ENCODE measurements at regions of chr11 and their contacts with region 1.

Region 1: GRCh38 chr11:2885676-2886081 is at the start of gene CDKN1C:
- DNase-seq: peak; percentile 41 to 94 (median 89)
- H3K4me3 ChIP-seq: peak within 1 kb of the TSS; percentile 53 to 81 (median 71)
- H3K27ac ChIP-seq: peak within 1 kb of the TSS; percentile 40 to 94 (median 88)
- H3K27me3 ChIP-seq: peaks cover 0 to 10% (median 0%) of the 10 kb centered on the region in 45 donors
- CTCF ChIP-seq: peak in 1 of 56 donors; percentile 13
- total RNA-seq, gene CDKN1C: 11.0 to 191 (median 44.8) TPM

Region 2: DNA sequence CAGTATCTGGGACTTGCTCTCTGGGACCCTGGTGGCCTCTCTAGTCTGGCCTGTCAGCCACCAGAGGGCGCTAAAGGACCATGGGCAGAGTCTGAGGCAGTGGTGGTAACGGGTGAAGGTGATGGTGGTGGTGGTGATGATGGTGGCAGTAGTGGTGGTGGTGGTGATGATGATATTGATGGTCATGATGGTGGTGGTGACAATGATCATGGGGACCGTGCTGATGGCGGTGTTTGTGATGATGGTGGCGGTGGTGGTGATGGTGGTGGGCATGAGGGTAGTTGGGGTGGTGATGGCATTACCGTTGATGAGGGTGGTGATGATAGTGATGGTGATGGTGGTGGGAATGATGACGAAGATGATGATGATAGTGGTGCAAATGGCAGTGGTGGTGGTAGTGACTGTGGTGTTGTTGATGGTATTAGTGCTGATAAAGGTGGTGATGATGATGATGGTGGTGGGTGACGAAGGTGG is 457.3 kb before region 1 on chr11:
- intact Hi-C with region 1: loop called (anchors 2 to 5 kb)
- DNase-seq: peak in 6 of 10 donors; percentile 28 to 71 (median 42)
- H3K4me3 ChIP-seq: no peak overlapping the region
- H3K27ac ChIP-seq: no peak overlapping the region
- H3K27me3 ChIP-seq: peaks cover 0 to 6% (median 0%) of the 10 kb centered on the region in 45 donors
- CTCF ChIP-seq: peak in 54 of 56 donors; percentile 38 to 77 (median 64)

Region 3: DNA sequence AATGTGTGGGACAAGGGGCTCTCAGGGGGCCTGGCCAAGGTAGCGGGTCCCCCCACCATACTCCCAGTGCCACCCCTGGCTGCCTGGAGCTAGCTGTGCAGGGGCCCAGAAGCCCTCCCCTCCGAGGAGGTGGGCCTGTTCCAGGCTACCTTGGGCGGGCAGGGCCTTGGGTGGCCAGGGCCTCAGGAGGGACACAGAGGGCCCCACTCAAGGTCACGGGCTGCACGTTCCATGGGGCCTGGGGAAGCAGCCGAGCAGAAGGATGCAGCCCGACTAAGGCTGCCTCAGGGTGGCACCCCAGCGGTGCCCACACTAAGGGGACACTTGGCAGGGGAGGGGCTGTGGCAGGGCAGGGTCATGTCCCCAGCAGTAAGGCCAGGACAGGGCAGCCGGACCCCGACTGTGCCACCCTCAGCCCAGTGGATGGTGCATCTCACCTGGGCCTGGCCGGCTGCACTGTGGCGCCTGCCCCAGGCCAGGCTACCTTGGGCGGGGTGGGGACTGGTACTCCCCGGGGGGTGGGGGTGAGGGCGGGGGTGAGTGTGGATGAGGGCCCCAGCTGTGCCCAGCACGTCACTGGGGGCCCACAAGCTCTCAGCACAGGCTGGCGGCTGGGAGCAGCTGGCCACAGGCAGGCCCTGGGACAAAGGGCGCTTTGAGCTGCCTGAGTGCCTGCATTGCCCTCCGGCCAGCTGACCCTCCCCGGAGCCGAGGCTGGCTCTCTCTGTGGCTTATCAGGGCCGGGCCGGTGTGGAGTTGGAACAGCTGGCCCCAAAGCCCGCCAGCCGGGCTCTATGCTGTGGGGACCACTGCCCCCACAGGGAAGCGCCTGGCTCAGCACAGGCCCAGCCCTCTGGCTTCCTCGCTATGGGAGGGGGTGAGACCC is 323.7 kb before region 1 on chr11:
- intact Hi-C with region 1: loop called in 1 of 2 experiments (anchors 10 kb)
- DNase-seq: peak; percentile 20 to 95 (median 92)
- H3K4me3 ChIP-seq: no peak overlapping the region
- H3K27ac ChIP-seq: peak overlapping the region in 20 of 59 donors; percentile 10 to 76 (median 52)
- H3K27me3 ChIP-seq: peaks cover 0 to 3% (median 0%) of the 10 kb centered on the region in 45 donors
- CTCF ChIP-seq: peak in 10 of 56 donors; percentile 9 to 39 (median 29)

Region 4: DNA sequence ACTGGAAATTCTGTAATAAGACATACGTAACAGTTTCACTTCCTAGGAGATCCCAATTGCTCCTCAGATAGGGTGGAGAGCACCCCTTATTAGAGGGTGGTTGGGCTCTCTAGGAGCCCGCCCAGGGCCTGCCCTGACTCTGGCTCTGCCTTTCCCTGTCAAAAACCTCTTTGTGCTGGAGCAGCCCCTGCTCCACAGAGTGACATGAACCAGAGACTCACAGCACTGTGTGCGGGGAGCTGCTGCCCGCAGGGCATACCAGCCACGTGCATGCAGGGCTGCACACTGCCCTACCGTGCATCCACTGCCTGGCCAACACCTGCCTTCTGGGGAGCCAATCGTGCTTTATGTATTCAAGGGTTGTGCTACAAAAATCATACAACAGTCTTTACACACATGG is 210.1 kb before region 1 on chr11:
- intact Hi-C with region 1: loop called (anchors 2 to 10 kb)
- DNase-seq: peak in 7 of 10 donors; percentile 18 to 62 (median 42)
- H3K4me3 ChIP-seq: peak overlapping the region in 1 of 59 donors; percentile 13
- H3K27ac ChIP-seq: peak overlapping the region in 29 of 59 donors; percentile 9 to 84 (median 65)
- H3K27me3 ChIP-seq: no peaks in the 10 kb centered on the region
- CTCF ChIP-seq: no peak

Region 5: DNA sequence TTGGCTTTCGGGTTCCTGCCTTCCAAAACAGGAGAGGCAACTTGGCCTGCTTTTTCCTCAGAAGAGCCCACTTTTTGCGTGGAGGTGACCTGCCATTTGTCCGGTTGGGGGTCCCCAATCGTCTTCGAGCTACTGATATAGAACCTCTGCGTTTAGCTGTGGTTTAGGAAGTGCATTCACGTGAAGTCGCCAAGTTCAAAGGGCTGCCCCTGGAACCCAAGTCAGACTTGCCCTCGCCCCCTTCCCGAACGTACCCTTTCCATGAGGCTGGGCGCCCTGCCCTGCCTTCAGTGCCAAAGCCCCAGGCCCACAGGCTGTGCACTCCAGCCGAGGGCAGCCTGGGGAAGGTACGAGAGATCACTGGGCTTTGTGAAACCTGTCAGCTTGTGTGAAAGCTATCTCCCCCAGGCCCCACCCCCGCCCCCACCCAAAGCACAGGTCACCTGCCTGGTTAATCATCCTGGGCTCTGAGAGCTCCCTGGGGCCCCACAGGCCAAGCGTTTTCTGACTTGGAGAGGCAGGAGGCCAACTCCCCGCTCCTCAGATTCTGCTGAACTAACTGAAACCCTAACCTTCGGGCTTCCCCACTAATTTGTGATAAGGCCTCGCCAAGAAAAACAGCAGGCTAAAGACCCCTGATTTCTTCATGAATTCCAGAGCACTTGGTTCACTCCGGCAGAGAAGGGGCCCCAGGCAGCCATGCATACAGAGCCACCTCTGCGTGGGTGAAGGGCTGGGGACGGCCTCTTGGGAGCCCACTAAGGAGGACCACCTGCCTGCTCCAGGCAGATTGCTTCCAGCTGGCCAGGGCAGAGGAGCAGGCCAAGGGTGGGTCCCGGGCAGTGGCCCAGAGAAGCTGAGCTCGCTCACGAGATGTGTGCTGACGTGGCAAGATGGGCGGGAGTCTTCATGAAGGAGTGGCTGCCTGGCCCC is 160.0 kb before region 1 on chr11:
- intact Hi-C with region 1: loop called in 1 of 2 experiments (anchors 5 kb)
- DNase-seq: no peak
- H3K4me3 ChIP-seq: no peak overlapping the region
- H3K27ac ChIP-seq: no peak overlapping the region
- H3K27me3 ChIP-seq: no peaks in the 10 kb centered on the region
- CTCF ChIP-seq: no peak

Region 6: GRCh38 chr11:2867722-2868505 is 17.8 kb before region 1 on chr11:
- intact Hi-C with region 1: loop called (anchors 1 kb)
- DNase-seq: peak in 2 of 10 donors; percentile 51 to 53
- H3K4me3 ChIP-seq: peak overlapping the region in 54 of 59 donors; percentile 0 to 61 (median 36)
- H3K27ac ChIP-seq: peak overlapping the region; percentile 9 to 98 (median 93)
- H3K27me3 ChIP-seq: peaks cover 0 to 51% (median 20%) of the 10 kb centered on the region in 45 donors
- CTCF ChIP-seq: peak in 25 of 56 donors; percentile 10 to 55 (median 24)

Measured in dorsolateral prefrontal cortex (tissue), 120 donors.